Adrenal gland (tissue), 19 donors: ENCODE measurements at regions of chr2 and their contacts with region 1.

Region 1: DNA sequence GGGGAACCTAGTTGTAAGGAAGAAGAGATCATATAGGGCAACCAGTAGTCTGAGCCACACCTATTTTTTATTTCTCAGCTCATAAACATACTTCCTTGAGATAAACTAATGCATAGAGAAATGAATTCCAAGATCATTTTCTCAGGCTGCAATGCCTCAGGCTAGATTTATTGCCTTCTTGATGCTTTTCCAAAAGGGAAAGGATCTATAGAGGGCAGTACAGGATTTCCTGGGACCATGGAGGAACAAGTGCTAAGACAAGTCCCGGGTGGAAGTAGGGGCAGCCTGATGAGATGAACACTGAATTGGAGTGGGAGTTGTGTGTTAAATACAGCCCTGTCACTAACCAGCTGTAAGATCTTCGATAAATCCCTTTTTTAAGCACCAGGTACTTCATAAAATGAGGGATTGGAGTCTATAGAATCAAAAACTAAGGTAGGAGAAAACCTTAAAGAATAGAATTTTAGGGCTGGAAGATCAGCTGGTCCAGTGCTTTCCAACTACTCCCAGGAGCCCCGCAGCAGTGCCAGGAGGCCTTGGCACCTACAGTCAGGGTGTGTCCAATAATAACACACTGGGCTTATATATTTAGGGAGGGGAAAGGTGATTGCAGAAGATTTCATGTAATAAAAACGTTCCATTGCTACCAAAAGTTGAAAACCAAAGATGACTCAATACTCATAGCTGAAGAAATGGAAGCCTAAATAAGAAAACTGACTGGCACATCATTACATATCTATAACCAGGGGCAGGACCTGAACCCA is 58.1 kb downstream of the SERTAD2 start:
- DNase-seq: no peak
- H3K4me3 ChIP-seq: no peak overlapping the region
- H3K27ac ChIP-seq: no peak overlapping the region
- H3K4me1 ChIP-seq: peaks cover 0 to 9% of the 10 kb centered on the region in 2 donors
- H3K27me3 ChIP-seq: no peaks in the 10 kb centered on the region
- CTCF ChIP-seq: peak in 1 of 6 experiments; percentile 15
- POLR2A ChIP-seq: no peak

Region 2: GRCh38 chr2:64644177-64645004 is 48.8 kb after region 1 on chr2:
- intact Hi-C with region 1: loop called in 1 of 2 experiments (anchors 10 kb)
- DNase-seq: peak; percentile 60 to 90 (median 79)
- H3K4me3 ChIP-seq: peak overlapping the region in 2 of 4 donors; percentile 23 to 59
- H3K27ac ChIP-seq: peak overlapping the region; percentile 69 to 94 (median 93)
- H3K4me1 ChIP-seq: peaks cover 33 to 83% of the 10 kb centered on the region in 2 donors
- H3K27me3 ChIP-seq: no peaks in the 10 kb centered on the region
- CTCF ChIP-seq: no peak
- POLR2A ChIP-seq: peak; percentile 68 to 78

Region 3: DNA sequence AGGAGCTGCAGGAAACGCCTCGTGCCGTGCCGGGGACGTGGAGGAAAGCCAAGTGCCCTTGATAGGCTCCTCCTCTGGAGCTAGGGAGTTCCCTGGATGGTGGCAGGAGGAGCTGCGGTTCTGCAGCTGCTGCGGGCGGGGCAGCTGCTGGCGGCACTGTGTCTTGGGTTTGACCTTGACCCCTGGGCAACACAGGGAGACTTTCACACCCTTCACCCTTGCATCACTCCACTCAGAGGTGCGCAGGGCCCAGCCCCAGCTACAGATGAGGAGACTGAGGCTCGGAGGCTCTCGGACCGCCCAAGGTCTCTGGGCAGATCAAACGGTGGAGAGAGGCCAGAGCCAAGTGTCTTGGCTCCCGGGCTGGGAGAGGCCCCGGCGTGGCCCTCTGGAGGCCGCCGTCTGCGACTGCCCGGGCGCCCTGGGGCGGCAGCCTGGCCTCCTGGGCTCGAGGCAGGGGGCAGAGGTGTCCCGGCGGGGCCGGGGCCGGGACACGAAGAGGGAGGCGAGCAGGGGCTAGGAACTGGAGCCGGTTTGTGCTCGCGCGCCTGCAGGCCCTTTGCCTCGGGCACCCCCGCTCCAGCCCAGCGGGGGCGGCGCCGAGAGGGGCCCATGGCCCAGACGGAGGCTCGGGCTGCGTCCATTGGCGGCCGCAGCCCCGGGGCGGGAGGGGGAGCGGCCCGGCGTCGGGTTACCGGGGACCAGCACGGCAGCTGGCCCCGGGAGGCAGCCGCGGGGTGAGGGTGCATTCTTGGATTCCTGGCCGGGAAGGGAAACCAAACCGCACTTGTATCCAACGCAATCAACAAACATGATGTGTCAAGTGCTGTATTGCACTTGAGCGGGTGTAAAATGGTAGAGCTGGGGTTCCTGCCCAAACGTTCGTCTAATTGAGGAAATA is 264.0 kb after region 1 on chr2:
- intact Hi-C with region 1: loop called in 1 of 2 experiments (anchors 5 kb)
- DNase-seq: peak; percentile 92 to 98 (median 96)
- H3K4me3 ChIP-seq: peak overlapping the region in 2 of 4 donors; percentile 24 to 36
- H3K27ac ChIP-seq: peak overlapping the region; percentile 88 to 97 (median 92)
- H3K4me1 ChIP-seq: peaks cover 30 to 35% of the 10 kb centered on the region in 2 donors
- H3K27me3 ChIP-seq: no peaks in the 10 kb centered on the region
- CTCF ChIP-seq: peak in 2 of 6 experiments; percentile 19 to 31
- POLR2A ChIP-seq: peak; percentile 49 to 73